ENCODE measurements at regions of chr12 and their contacts with region 1.

Region 1: GRCh38 chr12:52884526-52885293 is 20.2 kb downstream of the KRT8 start:
- DNase-seq: peak; percentile 90
- ATAC-seq: peak; percentile 90
- H3K4me3 Mint-ChIP-seq: no peak overlapping the region
- H3K27ac Mint-ChIP-seq: no peak overlapping the region
- H3K4me1 Mint-ChIP-seq: peaks cover 7% of the 10 kb centered on the region
- H3K27me3 Mint-ChIP-seq: peaks cover 5% of the 10 kb centered on the region

Region 2: GRCh38 chr12:52895061-52895887 is 10.6 kb after region 1 on chr12:
- CTCF ChIA-PET with region 1: interaction called, 32 read pairs
- POLR2A ChIA-PET with region 1: no interaction called
- intact Hi-C with region 1: no loop called
- DNase-seq: no peak
- ATAC-seq: no peak
- H3K4me3 Mint-ChIP-seq: no peak overlapping the region
- H3K27ac Mint-ChIP-seq: no peak overlapping the region
- H3K4me1 Mint-ChIP-seq: no peaks in the 10 kb centered on the region
- H3K27me3 Mint-ChIP-seq: no peaks in the 10 kb centered on the region

Region 3: DNA sequence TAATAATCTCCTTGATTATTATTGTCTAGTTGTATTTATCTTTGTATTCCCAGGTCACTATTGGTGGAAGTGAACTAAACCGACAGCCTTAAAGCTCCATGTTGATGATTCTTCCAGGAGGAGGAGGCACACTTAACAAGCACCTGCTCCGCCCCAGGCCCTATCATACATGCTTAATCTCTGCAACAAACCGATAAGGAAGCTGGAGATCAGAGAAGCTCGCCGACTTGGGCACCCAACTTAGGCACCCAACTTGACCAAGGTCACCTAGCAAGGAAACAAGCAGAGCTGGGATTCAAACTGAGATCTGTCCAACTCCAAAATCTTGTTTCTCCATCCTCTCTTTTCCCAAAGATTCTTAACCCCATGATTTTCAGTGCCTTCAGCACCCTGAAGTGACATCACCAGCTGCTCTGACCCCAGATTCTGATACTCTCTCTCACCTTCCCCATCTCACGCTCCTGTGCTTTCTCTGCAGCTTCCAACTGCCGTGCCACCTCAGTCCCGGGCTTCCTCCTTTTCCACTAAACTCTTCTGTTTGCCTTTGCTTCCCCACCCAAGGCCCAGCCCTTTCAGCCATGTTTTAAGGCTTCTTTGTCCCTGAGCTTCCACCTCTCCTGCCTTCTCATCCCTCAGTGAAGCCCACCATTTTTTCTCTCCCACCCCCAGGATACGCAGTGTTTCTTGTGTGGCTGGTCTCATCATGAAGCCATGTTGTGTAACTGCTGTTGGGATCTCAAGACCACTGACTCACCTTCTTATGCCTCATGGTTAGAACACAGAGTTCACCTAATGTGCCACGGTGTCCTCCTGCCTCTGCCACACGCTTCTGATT is 57.6 kb after region 1 on chr12:
- CTCF ChIA-PET with region 1: interaction called, 11 read pairs
- POLR2A ChIA-PET with region 1: no interaction called
- intact Hi-C with region 1: no loop called
- DNase-seq: no peak
- ATAC-seq: no peak
- H3K4me3 Mint-ChIP-seq: no peak overlapping the region
- H3K27ac Mint-ChIP-seq: no peak overlapping the region
- H3K4me1 Mint-ChIP-seq: no peaks in the 10 kb centered on the region
- H3K27me3 Mint-ChIP-seq: peaks cover 2% of the 10 kb centered on the region

Region 4: GRCh38 chr12:52992699-52993557 is 108.2 kb after region 1 on chr12:
- CTCF ChIA-PET with region 1: interaction called, 405 read pairs
- POLR2A ChIA-PET with region 1: no interaction called
- intact Hi-C with region 1: no loop called
- DNase-seq: no peak
- ATAC-seq: no peak
- H3K4me3 Mint-ChIP-seq: no peak overlapping the region
- H3K27ac Mint-ChIP-seq: no peak overlapping the region
- H3K4me1 Mint-ChIP-seq: no peaks in the 10 kb centered on the region
- H3K27me3 Mint-ChIP-seq: no peaks in the 10 kb centered on the region